ENCODE measurements at regions of chr11 and their contacts with region 1.

Region 1: GRCh38 chr11:76207642-76208401 is 1.5 kb upstream of the WNT11 start:
- DNase-seq: peak; percentile 72 to 82 (median 81)
- H3K4me3 ChIP-seq: peak overlapping the region; percentile 17 to 86 (median 70)
- H3K27ac ChIP-seq: no peak overlapping the region
- H3K4me1 ChIP-seq: peaks cover 0 to 62% (median 55%) of the 10 kb centered on the region in 4 experiments
- H3K27me3 ChIP-seq: peaks cover 20 to 86% (median 46%) of the 10 kb centered on the region in 5 experiments

Region 2: GRCh38 chr11:75525596-75526541 is 682.0 kb before region 1 on chr11 and contains the start of gene GDPD5:
- CTCF ChIA-PET with region 1: no interaction called
- POLR2A ChIA-PET with region 1: no interaction called
- DNase-seq: peak; percentile 81 to 91 (median 91)
- H3K4me3 ChIP-seq: peak within 1 kb of the TSS; percentile 60 to 91 (median 76)
- H3K27ac ChIP-seq: no peak within 1 kb of the TSS
- H3K4me1 ChIP-seq: peaks cover 0 to 20% (median 17%) of the 10 kb centered on the region in 4 experiments
- H3K27me3 ChIP-seq: peaks cover 0 to 22% (median 11%) of the 10 kb centered on the region in 5 experiments

Region 3: GRCh38 chr11:75733431-75734107 is 474.3 kb before region 1 on chr11:
- CTCF ChIA-PET with region 1: no interaction called
- POLR2A ChIA-PET with region 1: no interaction called
- DNase-seq: no peak
- H3K4me3 ChIP-seq: no peak overlapping the region
- H3K27ac ChIP-seq: no peak overlapping the region
- H3K4me1 ChIP-seq: no peaks in the 10 kb centered on the region
- H3K27me3 ChIP-seq: peaks cover 0 to 2% (median 0%) of the 10 kb centered on the region in 5 experiments

Region 4: GRCh38 chr11:76194872-76195668 is 12.8 kb before region 1 on chr11:
- CTCF ChIA-PET with region 1: interaction called, 12 read pairs
- POLR2A ChIA-PET with region 1: no interaction called
- DNase-seq: no peak
- H3K4me3 ChIP-seq: no peak overlapping the region
- H3K27ac ChIP-seq: no peak overlapping the region
- H3K4me1 ChIP-seq: no peaks in the 10 kb centered on the region
- H3K27me3 ChIP-seq: no peaks in the 10 kb centered on the region

Region 5: GRCh38 chr11:76225122-76225611 is 17.3 kb after region 1 on chr11:
- CTCF ChIA-PET with region 1: interaction called, 15 read pairs
- POLR2A ChIA-PET with region 1: no interaction called
- DNase-seq: no peak
- H3K4me3 ChIP-seq: no peak overlapping the region
- H3K27ac ChIP-seq: no peak overlapping the region
- H3K4me1 ChIP-seq: no peaks in the 10 kb centered on the region
- H3K27me3 ChIP-seq: peaks cover 0 to 2% (median 0%) of the 10 kb centered on the region in 5 experiments

Region 6: GRCh38 chr11:76235233-76236091 is 27.6 kb after region 1 on chr11:
- CTCF ChIA-PET with region 1: interaction called, 11 read pairs
- POLR2A ChIA-PET with region 1: interaction called, 5 read pairs
- DNase-seq: peak; percentile 95 to 97 (median 97)
- H3K4me3 ChIP-seq: peak overlapping the region; percentile 68 to 97 (median 91)
- H3K27ac ChIP-seq: peak overlapping the region; percentile 89 to 93
- H3K4me1 ChIP-seq: peaks cover 0 to 22% (median 19%) of the 10 kb centered on the region in 4 experiments
- H3K27me3 ChIP-seq: no peaks in the 10 kb centered on the region

Region 7: GRCh38 chr11:76318744-76319384 is 111.0 kb after region 1 on chr11:
- CTCF ChIA-PET with region 1: interaction called, 102 read pairs
- POLR2A ChIA-PET with region 1: interaction called, 3 read pairs
- DNase-seq: peak; percentile 76 to 86 (median 83)
- H3K4me3 ChIP-seq: no peak overlapping the region
- H3K27ac ChIP-seq: no peak overlapping the region
- H3K4me1 ChIP-seq: peaks cover 0 to 16% (median 10%) of the 10 kb centered on the region in 4 experiments
- H3K27me3 ChIP-seq: peaks cover 0 to 12% (median 5%) of the 10 kb centered on the region in 5 experiments

Region 8: GRCh38 chr11:76419896-76420295 is 212.1 kb after region 1 on chr11:
- CTCF ChIA-PET with region 1: interaction called, 12 read pairs
- POLR2A ChIA-PET with region 1: no interaction called
- DNase-seq: peak; percentile 41 to 65 (median 57)
- H3K4me3 ChIP-seq: no peak overlapping the region
- H3K27ac ChIP-seq: no peak overlapping the region
- H3K4me1 ChIP-seq: no peaks in the 10 kb centered on the region
- H3K27me3 ChIP-seq: peaks cover 0 to 1% (median 0%) of the 10 kb centered on the region in 5 experiments

Region 9: DNA sequence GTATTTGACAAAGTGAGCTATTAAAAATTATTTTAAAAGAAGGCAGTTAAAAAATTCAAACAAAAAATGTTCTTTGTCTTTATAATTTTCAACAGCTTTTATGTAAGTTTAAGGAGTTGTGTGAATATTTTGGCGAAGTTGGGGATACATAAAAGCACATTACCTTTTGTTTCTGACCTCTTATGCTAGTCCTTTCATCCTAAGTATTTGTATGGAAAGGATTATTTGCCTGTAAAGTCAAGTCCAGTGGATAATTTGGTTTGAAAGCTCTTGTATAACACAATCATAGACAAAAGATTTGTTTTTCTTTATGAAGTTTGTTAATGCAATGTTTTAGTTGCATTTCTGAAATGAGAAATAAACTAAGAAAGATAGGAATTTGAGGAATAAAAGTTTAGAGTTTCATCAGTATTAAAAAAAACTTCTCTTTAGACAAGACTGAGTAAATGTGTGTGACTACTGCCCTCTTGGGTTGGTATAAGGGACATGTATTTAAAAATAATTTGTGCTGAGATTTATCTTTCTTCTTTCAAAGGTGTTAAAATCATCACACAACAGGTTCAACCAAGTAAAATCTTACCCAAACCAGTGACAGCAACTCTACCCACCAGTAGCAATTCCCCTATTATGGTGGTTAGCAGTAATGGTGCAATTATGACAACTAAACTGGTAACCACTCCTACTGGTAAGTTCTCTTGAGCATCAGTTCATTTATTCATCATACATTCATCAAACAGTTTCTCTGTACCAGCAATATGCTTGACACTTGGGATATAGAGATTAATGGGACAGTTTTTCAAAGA is 305.2 kb after region 1 on chr11:
- CTCF ChIA-PET with region 1: interaction called, 35 read pairs
- POLR2A ChIA-PET with region 1: no interaction called
- DNase-seq: peak; percentile 43 to 63 (median 63)
- H3K4me3 ChIP-seq: no peak overlapping the region
- H3K27ac ChIP-seq: no peak overlapping the region
- H3K4me1 ChIP-seq: no peaks in the 10 kb centered on the region
- H3K27me3 ChIP-seq: no peaks in the 10 kb centered on the region

Region 10: DNA sequence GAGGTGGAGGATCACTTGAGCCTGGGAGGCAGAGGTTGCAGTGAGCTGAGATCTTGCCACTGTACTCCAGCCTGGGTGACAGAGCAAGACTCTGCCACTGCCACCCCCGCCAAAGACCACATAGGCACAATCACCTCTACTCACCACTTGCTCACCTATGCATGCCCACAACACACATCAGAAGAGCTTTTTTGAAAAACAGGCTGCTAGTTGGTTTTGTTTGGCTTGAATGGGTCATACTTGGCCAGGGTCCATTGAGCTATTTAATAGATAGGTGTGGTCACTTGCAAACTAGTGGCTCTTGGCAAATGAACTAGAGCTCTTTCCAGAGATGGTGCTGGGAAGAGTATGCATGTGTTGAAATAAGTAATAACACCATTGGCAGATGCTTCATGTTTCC is 317.1 kb after region 1 on chr11:
- CTCF ChIA-PET with region 1: no interaction called
- POLR2A ChIA-PET with region 1: no interaction called
- DNase-seq: no peak
- H3K4me3 ChIP-seq: no peak overlapping the region
- H3K27ac ChIP-seq: no peak overlapping the region
- H3K4me1 ChIP-seq: peaks cover 2 to 11% (median 7%) of the 10 kb centered on the region in 4 experiments
- H3K27me3 ChIP-seq: no peaks in the 10 kb centered on the region